CD4-positive, alpha-beta T cell (primary cell): ENCODE measurements at regions of chr6 and their contacts with region 1.

Region 1: DNA sequence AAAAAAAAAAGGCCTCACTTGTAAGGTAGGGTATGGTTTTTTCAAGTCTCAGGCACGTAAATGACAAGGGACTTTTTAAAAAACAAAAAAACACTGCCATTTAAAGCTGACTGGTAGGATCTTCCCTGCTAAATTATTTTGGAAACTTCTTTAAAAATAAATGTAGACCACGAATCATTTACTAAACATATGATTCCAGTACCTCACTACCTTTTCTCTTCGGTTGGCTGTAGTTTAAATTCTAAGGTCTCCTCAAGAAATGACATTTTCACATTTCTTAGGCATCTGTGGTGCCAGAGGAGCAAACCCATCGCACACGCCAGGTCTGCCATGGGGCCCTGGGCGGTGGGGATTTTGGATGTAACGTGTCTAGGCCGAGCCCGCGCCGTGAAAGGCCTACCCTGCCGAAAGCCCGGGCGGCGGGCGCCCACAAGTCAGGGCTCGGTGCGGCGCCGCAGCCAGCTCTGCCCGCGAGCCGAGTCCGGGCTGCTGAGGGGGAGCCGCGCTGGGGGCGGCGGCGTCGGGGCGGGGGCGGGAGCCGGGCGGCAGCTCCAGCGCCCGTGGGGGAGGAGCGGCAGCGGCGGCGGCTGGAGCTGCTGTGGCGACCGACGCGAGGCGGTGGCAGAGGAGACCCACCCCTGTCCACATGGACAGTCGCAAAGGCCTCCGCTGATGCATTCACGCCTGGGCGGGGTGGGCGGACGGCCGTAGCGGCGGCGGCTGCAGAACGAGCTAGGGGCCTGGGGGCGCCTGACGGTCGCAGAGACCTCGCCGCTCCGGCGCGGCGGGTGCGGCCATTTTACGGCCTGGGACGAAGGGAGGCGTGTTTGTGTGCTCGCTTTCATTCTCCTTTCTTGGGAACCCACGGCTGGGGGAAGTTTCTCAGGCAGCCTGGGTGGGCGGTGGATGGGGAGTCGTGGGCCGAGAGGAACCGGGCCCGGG is at the start of gene SENP6:
- DNase-seq: peak; percentile 51 to 91 (median 69)
- ATAC-seq: peak; percentile 72
- H3K4me3 ChIP-seq: peak within 1 kb of the TSS; percentile 73
- H3K4me3 Mint-ChIP-seq: peak within 1 kb of the TSS; percentile 96
- H3K27ac ChIP-seq: peak within 1 kb of the TSS; percentile 92 to 96
- H3K27ac Mint-ChIP-seq: peak within 1 kb of the TSS; percentile 99
- H3K4me1 ChIP-seq: peaks cover 36% of the 10 kb centered on the region
- H3K4me1 Mint-ChIP-seq: peaks cover 73% of the 10 kb centered on the region
- H3K27me3 ChIP-seq: no peaks in the 10 kb centered on the region
- H3K27me3 Mint-ChIP-seq: no peaks in the 10 kb centered on the region
- CTCF ChIP-seq: no peak
- total RNA-seq, gene SENP6: 82.0 to 94.8 TPM

Region 2: DNA sequence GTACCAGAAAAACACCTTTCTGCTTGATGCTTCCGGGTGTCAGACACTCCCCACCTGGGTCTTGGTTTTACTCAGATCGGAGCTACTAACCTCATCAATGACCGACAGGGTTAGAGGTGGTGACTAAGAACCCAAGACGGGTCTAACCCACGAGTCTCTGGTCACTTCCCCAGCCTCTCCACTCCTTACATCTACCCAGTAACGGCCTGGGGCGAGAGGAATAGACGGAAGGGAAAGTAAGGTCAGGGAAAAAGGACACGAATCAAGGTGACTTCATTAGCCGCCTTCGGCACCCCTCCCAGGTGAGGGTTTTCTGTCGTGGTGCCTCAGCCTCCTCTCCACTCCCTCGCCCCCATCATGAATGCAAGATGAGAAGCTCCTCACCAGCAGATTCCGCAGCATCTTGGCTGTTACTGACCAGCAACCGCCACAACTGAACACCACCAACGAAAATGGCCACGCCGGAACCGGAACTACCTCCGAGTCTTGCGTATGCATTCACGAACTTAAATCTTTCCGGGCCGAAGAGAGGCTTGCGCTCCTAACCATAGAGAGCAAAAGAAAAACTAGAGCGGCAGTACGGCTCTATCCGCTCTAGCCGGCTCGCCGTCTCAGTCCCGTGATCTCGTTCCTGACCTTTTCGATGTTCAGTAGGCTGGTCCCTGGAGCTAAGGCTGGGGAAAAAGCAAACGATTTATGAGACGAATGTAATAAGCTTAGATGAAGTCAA is 358.1 kb before region 1 on chr6 and contains the start of gene COX7A2:
- CTCF ChIA-PET with region 1: no interaction called
- POLR2A ChIA-PET with region 1: interaction called, 23 read pairs
- intact Hi-C with region 1: loop called in 1 of 2 experiments (anchors 5 kb)
- DNase-seq: peak; percentile 73 to 96 (median 78)
- ATAC-seq: peak; percentile 95
- H3K4me3 ChIP-seq: peak within 1 kb of the TSS; percentile 88
- H3K4me3 Mint-ChIP-seq: peak within 1 kb of the TSS; percentile 99
- H3K27ac ChIP-seq: peak within 1 kb of the TSS; percentile 87 to 97
- H3K27ac Mint-ChIP-seq: peak within 1 kb of the TSS; percentile 95
- H3K4me1 ChIP-seq: peaks cover 24% of the 10 kb centered on the region
- H3K4me1 Mint-ChIP-seq: peaks cover 40% of the 10 kb centered on the region
- H3K27me3 ChIP-seq: no peaks in the 10 kb centered on the region
- H3K27me3 Mint-ChIP-seq: peaks cover 17% of the 10 kb centered on the region
- CTCF ChIP-seq: no peak
- total RNA-seq, gene COX7A2: 189 to 195 TPM

Region 3: GRCh38 chr6:75284632-75285286 is 316.8 kb before region 1 on chr6 and contains the start of gene TMEM30A:
- CTCF ChIA-PET with region 1: no interaction called
- POLR2A ChIA-PET with region 1: interaction called, 19 read pairs
- intact Hi-C with region 1: loop called in 1 of 2 experiments (anchors 5 kb)
- DNase-seq: peak; percentile 90 to 100 (median 95)
- ATAC-seq: peak; percentile 96
- H3K4me3 ChIP-seq: peak within 1 kb of the TSS; percentile 78
- H3K4me3 Mint-ChIP-seq: no peak within 1 kb of the TSS
- H3K27ac ChIP-seq: peak within 1 kb of the TSS; percentile 76 to 85
- H3K27ac Mint-ChIP-seq: no peak within 1 kb of the TSS
- H3K4me1 ChIP-seq: peaks cover 9% of the 10 kb centered on the region
- H3K4me1 Mint-ChIP-seq: peaks cover 47% of the 10 kb centered on the region
- H3K27me3 ChIP-seq: no peaks in the 10 kb centered on the region
- H3K27me3 Mint-ChIP-seq: no peaks in the 10 kb centered on the region
- CTCF ChIP-seq: no peak
- total RNA-seq, gene TMEM30A: 29.8 to 33.2 TPM

Region 4: DNA sequence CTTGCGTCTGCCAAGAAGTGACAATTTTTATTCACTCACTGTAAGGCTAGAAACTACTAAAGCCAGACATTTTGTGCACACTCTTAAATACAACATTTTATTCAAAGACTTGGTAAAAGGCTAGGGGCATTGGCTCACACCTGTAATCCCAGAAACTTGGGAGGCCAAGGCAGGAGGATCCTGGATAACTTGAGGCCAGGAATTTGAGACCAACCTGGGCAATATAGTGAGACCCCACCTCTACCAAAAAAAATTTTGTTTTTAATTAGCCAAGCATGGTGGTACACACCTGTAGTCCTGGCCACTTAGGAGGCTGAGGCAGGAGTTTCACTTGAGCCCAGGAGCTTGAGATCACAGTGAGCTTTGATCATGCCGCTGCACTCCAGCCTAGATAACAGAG is 11.2 kb before region 1 on chr6:
- CTCF ChIA-PET with region 1: no interaction called
- POLR2A ChIA-PET with region 1: interaction called, 16 read pairs
- intact Hi-C with region 1: no loop called
- DNase-seq: no peak
- ATAC-seq: no peak
- H3K4me3 ChIP-seq: no peak overlapping the region
- H3K4me3 Mint-ChIP-seq: no peak overlapping the region
- H3K27ac ChIP-seq: no peak overlapping the region
- H3K27ac Mint-ChIP-seq: no peak overlapping the region
- H3K4me1 ChIP-seq: no peaks in the 10 kb centered on the region
- H3K4me1 Mint-ChIP-seq: no peaks in the 10 kb centered on the region
- H3K27me3 ChIP-seq: no peaks in the 10 kb centered on the region
- H3K27me3 Mint-ChIP-seq: no peaks in the 10 kb centered on the region
- CTCF ChIP-seq: no peak

Region 5: DNA sequence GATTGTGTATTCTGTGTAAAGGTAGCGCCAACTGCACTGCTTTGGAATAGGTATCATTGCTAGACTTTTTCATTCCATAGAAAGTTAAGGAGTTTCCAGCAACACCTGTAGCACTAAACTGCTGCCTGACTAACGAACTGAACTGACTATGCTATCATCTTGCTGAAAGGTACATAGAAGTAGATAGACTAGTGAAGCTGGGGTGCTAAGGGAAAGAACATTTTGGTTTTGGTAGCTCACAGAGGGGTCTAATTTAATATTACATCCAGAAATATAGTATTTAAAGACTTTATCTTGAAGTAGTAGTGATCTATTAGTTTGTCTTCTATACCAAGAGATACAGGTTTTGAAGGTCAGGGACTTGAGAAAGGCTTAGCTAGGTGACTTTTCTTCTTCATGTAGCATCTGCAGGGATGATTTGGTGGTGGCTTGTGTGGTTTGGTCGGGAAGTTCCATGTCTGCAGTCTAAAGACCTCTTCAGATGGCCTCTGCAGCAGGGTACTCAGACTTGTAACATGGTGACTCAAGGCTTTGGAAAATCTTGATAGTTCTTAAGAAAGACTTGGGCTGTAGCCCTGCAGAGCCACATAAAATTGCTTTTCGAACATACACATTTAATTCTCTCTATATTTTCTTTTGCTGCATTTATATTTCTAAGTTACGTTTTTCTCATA is 10.3 kb after region 1 on chr6:
- CTCF ChIA-PET with region 1: interaction called, 4 read pairs
- POLR2A ChIA-PET with region 1: interaction called, 32 read pairs
- intact Hi-C with region 1: no loop called
- DNase-seq: peak in 4 of 14 experiments; percentile 6 to 57 (median 28)
- ATAC-seq: no peak
- H3K4me3 ChIP-seq: no peak overlapping the region
- H3K4me3 Mint-ChIP-seq: peak overlapping the region; percentile 80
- H3K27ac ChIP-seq: no peak overlapping the region
- H3K27ac Mint-ChIP-seq: peak overlapping the region; percentile 81
- H3K4me1 ChIP-seq: peaks cover 47% of the 10 kb centered on the region
- H3K4me1 Mint-ChIP-seq: peaks cover 91% of the 10 kb centered on the region
- H3K27me3 ChIP-seq: no peaks in the 10 kb centered on the region
- H3K27me3 Mint-ChIP-seq: no peaks in the 10 kb centered on the region
- CTCF ChIP-seq: no peak

Region 6: DNA sequence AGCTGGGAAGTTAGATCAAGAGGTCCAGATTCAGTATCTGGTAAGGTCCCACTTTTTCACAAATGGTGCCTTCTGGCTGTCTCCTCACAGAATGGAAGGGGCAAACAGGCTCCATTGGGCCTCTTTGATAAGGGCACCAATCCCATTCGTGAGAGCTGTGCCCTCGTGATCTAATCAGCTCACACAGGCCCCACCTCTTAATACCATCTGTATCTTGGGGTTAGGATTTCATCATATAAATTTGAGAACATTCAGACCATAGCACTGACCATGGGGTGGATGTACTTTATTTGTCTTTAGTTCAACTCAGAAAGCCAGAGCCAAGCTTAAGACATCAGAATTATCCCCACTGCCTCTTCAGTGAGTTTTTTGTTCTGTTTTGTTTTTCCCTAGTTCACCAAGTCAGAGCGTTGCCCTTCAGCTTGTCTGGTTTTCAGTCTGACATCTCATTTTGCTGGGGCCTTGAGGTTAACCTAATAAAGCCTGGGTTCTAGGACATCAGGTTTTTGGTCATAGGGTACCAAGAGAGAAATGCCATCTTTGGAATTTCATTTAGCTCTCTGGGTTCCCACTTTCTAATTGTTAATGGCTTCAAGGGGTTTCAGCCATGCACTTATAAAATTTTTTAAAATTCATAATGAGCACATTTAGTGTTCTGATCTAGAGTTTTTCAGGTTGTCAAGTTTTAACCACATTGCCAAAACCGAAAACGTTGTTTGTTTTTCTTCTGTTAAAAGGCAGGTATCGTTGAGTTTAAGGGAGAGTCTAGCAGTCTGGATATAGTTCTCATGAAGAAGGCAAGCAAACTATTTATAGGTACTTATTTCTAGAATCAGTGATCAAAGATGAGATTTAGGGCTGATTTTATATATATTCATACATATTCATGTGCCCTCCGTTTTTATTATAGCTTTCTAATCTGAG is 19.1 kb after region 1 on chr6:
- CTCF ChIA-PET with region 1: interaction called, 3 read pairs
- POLR2A ChIA-PET with region 1: interaction called, 7 read pairs
- intact Hi-C with region 1: loop called in 1 of 2 experiments (anchors 2 kb)
- DNase-seq: no peak
- ATAC-seq: no peak
- H3K4me3 ChIP-seq: no peak overlapping the region
- H3K4me3 Mint-ChIP-seq: peak overlapping the region; percentile 14
- H3K27ac ChIP-seq: no peak overlapping the region
- H3K27ac Mint-ChIP-seq: peak overlapping the region; percentile 78
- H3K4me1 ChIP-seq: peaks cover 25% of the 10 kb centered on the region
- H3K4me1 Mint-ChIP-seq: peaks cover 62% of the 10 kb centered on the region
- H3K27me3 ChIP-seq: no peaks in the 10 kb centered on the region
- H3K27me3 Mint-ChIP-seq: no peaks in the 10 kb centered on the region
- CTCF ChIP-seq: no peak